A549 (cell line): ENCODE measurements at regions of chr19 and their contacts with region 1.

Region 1: DNA sequence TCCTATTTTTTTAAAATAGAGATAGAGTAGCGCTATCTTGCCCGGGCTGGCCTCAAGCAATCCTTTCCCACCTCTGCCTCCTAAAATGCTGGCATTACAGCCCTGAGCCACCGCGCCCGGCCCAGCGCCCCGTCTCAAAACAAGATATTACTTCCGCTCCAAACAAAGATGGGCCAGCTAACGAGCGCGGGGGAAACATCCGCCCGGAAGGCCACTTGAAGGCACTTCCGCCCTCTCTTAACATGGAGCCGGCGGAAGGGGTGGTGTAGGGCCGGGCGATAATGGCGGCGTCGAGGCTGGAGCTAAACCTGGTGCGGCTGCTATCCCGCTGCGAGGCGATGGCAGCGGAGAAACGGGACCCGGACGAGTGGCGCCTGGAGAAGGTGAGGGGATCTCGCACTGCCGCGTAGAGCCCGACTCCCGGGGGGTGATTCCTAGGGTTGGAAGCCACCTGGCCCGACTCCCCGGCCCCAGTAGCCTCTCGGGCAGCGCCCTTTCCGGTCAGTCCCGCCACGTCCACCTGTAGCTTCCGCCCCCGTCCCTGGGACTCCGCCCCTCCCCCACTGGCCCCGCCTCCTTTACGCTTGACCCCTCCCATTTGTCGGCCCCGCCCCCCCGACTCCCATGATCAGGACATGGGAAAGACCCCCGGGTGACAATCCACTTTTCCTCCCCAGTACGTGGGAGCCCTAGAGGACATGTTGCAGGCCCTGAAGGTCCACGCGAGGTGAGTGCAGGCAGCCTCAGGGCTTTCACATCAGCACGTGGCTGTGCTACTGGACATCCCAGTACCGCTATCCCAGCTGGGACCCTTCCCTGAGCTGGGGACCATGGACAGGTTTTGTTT is at the start of gene USE1:
- DNase-seq: peak; percentile 76 to 91
- ATAC-seq: peak; percentile 92 to 95
- H3K4me3 ChIP-seq: peak within 1 kb of the TSS; percentile 60
- H3K27ac ChIP-seq: peak within 1 kb of the TSS; percentile 97
- H3K4me1 ChIP-seq: peaks cover 14% of the 10 kb centered on the region
- CTCF ChIP-seq: no peak
- EP300 ChIP-seq: no peak
- POLR2A ChIP-seq: peak; percentile 66
- RAD21 ChIP-seq: no peak
- polyA plus RNA-seq, gene USE1: 10.1 and 10.2 TPM in 2 replicates

Region 2: DNA sequence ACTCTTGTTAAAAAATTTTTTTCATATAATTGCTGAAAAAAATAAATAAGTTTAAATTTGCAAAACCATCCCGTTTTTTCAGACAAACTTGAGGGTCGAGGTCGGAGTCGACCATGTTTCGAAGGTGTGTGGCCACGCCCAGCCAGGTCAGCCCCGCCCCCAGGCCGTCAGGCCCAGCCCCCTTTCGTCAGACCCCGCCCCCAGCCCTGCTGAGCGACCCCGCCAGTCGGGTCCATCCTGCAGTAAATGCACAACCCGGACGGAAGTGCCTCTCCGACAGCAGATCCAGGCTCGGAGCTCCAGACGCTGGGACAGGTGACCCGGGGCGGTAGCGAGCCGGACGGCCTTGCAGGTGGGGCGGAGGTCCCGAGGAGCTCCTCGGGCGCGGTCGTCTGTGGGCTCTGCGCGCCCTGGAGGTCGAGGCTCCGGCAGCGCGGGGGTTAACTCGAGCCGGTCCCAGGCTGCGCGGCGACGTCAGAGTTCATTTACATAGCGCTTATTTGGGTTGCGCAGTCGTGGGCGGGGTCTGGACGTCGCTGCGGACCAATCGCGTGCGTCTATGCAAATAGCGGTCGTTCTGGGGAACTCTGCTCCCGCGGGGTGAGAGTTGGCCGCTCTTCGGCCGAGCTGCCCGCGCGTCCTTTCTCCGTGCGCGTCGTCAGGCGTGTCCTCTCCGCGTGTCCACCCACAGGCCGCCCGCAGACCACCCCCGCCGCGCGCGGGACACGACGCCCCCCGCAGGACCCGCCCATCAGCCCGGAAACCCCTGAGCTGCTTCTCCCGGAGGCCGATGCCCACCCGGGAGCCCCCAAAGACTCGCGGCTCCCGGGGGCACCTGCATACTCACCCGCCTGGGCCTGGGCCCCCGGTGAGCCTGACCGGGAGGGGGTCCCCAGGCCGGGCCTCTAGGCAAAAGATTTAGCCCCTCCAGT is 10.9 kb after region 1 on chr19 and contains the start of gene OCEL1:
- CTCF ChIA-PET with region 1: no interaction called
- POLR2A ChIA-PET with region 1: interaction called, 18 read pairs
- DNase-seq: peak; percentile 80 to 97
- ATAC-seq: peak; percentile 93 to 94
- H3K4me3 ChIP-seq: peak within 1 kb of the TSS; percentile 64
- H3K27ac ChIP-seq: peak within 1 kb of the TSS; percentile 83 to 92
- H3K4me1 ChIP-seq: peaks cover 9% of the 10 kb centered on the region; the same call in 1 of the 3 replicates
- CTCF ChIP-seq: no peak
- EP300 ChIP-seq: no peak
- POLR2A ChIP-seq: peak; percentile 43
- RAD21 ChIP-seq: no peak
- polyA plus RNA-seq, gene OCEL1: 5.5 and 8.5 TPM in 2 replicates

Region 3: GRCh38 chr19:17235618-17236377 is 20.4 kb after region 1 on chr19:
- CTCF ChIA-PET with region 1: interaction called, 5 read pairs
- POLR2A ChIA-PET with region 1: interaction called, 16 read pairs
- DNase-seq: peak in 1 of 2 experiments; percentile 88
- ATAC-seq: peak; percentile 59 to 79
- H3K4me3 ChIP-seq: peak overlapping the region; percentile 88
- H3K27ac ChIP-seq: peak overlapping the region; percentile 99 to 100
- H3K4me1 ChIP-seq: peaks cover 60% of the 10 kb centered on the region
- CTCF ChIP-seq: peak; percentile 48
- EP300 ChIP-seq: no peak
- POLR2A ChIP-seq: peak; percentile 34
- RAD21 ChIP-seq: peak; percentile 22 to 29; a peak in 2 of 5 replicates